GM10248 (cell line): ENCODE measurements at regions of chr6 and their contacts with region 1.

Region 1: GRCh38 chr6:15399641-15400470 is 154.0 kb downstream of the JARID2 start:
- DNase-seq: no peak
- CTCF ChIP-seq: no peak

Region 2: DNA sequence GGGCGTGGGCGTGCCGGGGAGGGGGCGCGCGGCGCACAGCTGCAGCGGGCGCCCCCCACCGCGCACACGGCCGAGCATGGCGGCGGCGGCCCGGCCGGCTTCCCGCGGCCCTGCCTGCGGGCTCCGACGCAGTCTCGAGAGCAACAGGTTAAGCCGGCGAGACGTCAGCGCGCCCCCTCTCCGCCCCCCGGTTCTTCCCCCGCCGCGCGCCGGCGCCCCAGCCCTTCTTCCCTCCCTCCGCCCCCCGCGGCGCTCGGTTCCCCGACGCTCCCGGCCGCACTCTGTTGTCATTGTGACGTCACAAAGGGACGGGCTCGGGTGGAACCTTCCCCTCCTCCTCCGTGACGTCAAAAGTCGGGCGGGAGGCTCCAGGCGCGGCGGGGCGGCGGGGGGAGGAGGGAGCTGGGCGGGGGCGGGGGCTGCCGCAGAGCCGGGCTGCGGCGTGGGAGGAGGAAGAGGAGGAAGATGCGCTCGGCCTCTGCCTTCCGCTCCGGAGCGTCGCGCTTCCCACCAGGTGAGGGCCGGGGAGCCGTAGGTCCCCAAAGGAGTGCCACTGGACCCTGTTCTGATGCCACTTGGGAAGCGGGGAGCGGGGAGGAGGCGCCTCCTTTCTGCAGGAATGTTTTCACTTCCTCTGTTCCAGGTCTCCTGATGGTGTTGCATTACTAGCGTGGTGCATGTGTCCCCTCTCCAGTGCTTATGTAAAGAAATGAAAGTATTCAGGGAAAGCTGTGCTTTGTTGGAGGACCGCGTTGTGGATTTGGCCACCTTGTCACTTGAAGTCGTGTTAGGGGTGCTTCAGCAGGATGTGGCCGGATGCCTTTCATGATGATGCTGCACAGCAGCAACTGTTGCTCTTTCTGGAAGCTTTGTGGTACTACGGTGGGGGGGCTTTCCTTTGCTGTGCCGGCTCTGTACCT is 151.1 kb before region 1 on chr6:
- CTCF ChIA-PET with region 1: interaction called, 4 read pairs
- POLR2A ChIA-PET with region 1: interaction called, 10 read pairs
- DNase-seq: peak; percentile 93
- CTCF ChIP-seq: no peak

Region 3: GRCh38 chr6:15465212-15465611 is 65.4 kb after region 1 on chr6:
- CTCF ChIA-PET with region 1: no interaction called
- POLR2A ChIA-PET with region 1: no interaction called
- DNase-seq: no peak
- CTCF ChIP-seq: no peak